WTC11 (cell line): ENCODE measurements at regions of chr15 and their contacts with region 1.

Region 1: DNA sequence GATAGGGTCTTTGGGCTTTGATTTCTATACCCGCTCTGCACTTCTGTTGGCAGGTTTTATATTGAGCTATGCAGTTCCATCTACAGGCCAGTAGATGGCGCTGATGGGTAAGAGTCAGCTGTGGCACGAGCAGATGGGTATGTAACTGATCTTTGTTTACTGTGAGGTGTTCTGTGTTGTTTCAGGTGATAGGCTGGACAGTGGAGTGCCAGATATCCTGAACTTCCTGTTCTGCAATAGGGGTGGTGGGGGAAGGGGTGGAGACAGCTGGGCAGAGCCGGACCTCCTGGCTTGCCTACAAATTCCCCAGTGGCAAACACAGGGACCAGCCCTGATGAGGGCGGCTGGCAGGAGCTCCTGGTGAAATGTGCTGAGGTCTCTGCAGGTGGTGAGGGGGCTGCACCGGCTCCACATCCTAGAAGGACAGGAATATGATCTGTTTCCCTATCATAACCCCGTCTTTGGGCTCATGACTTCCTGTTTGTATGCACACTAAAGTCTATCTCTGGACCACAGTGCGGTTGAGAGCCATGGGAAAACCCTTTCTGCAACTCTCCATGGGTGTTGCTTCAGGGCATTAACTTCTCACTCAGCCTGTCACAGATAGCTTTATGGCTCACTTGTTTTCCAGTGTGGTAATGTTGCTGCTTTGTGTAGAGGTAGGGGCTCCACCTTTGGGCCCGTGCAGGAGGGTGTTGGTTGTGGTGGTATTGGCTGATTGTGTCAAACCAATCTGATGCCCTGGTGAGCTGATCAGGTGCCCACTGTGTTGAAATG is 13.4 kb upstream of the FAM98B start:
- DNase-seq: peak; percentile 27
- ATAC-seq: peak; percentile 96
- H3K4me3 Mint-ChIP-seq: 0 out of 2 replicates have a peak overlapping the region, but pooled peaks have one; percentile 22
- H3K27ac Mint-ChIP-seq: no peak overlapping the region
- H3K4me1 Mint-ChIP-seq: peaks cover 7% of the 10 kb centered on the region; the same call in 1 of the 2 replicates
- H3K27me3 Mint-ChIP-seq: peaks cover 3% of the 10 kb centered on the region; the same call in 1 of the 2 replicates
- CTCF ChIP-seq: peak; percentile 91

Region 2: DNA sequence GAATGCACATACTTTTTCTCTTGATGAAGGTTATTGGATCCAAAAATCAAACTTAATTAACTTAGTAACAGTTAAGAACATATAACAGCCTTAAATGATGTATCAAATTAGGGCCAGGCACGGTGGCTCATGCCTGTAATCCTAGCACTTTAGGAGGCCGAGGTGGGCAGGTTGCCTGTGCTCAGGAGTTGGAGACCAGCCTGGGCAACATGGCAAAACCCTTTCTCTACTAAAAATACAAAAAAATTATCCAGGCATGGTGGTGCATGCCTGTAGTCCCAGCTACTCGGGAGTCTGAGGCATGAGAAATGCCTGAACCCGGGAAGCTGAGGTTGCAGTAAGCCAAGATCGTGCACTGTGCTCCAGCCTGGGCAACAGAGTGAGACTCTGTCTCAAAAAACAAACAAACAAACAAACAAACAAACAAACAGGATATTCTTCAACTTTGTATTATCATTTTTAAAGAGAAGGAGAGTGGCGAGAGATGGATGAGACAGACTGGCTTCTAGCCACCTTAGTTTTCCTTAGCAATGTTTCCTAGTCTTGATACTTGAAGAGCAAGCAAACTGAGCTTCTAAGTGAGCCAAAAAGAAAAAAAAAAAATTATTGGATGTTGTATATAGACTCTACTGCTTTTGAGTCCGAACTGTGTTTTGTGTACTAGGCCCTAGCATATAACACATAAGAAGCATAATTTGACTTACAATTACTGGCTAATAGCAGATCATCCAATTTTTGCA is 174.1 kb before region 1 on chr15:
- CTCF ChIA-PET with region 1: no interaction called
- POLR2A ChIA-PET with region 1: no interaction called
- DNase-seq: no peak
- ATAC-seq: no peak
- H3K4me3 Mint-ChIP-seq: no peak overlapping the region
- H3K27ac Mint-ChIP-seq: peak overlapping the region; percentile 75
- H3K4me1 Mint-ChIP-seq: peaks cover 21% of the 10 kb centered on the region
- H3K27me3 Mint-ChIP-seq: no peaks in the 10 kb centered on the region
- CTCF ChIP-seq: no peak

Region 3: GRCh38 chr15:38349251-38349650 is 91.3 kb before region 1 on chr15:
- CTCF ChIA-PET with region 1: no interaction called
- POLR2A ChIA-PET with region 1: no interaction called
- DNase-seq: no peak
- ATAC-seq: no peak
- H3K4me3 Mint-ChIP-seq: no peak overlapping the region
- H3K27ac Mint-ChIP-seq: no peak overlapping the region
- H3K4me1 Mint-ChIP-seq: peaks cover 2% of the 10 kb centered on the region
- H3K27me3 Mint-ChIP-seq: no peaks in the 10 kb centered on the region
- CTCF ChIP-seq: no peak

Region 4: GRCh38 chr15:38367476-38367875 is 73.1 kb before region 1 on chr15:
- CTCF ChIA-PET with region 1: no interaction called
- POLR2A ChIA-PET with region 1: no interaction called
- DNase-seq: no peak
- ATAC-seq: no peak
- H3K4me3 Mint-ChIP-seq: no peak overlapping the region
- H3K27ac Mint-ChIP-seq: no peak overlapping the region
- H3K4me1 Mint-ChIP-seq: peaks cover 13% of the 10 kb centered on the region
- H3K27me3 Mint-ChIP-seq: no peaks in the 10 kb centered on the region
- CTCF ChIP-seq: no peak

Region 5: DNA sequence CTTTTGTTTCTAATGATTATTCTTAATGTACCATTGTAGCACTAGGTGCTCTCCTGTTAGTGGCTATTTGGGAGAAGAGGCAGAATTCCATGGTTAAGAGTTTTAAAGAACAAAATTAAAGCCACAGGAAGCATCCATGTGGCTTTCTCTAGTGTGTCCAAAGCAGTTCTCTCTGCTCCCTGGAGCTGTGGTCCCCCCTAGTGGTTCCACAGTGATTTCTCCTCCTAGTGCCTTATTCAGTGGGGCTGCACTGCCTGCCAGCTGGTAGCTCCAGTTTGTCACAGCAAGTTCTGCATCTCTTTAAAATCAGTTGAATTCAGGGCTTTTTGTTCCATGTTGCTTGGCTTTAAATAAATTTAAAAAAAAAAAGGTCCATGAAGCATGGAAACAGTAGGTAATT is 26.2 kb before region 1 on chr15:
- CTCF ChIA-PET with region 1: interaction called, 14 read pairs
- POLR2A ChIA-PET with region 1: no interaction called
- DNase-seq: peak; percentile 67
- ATAC-seq: peak; percentile 98
- H3K4me3 Mint-ChIP-seq: no peak overlapping the region
- H3K27ac Mint-ChIP-seq: no peak overlapping the region
- H3K4me1 Mint-ChIP-seq: no peaks in the 10 kb centered on the region
- H3K27me3 Mint-ChIP-seq: no peaks in the 10 kb centered on the region
- CTCF ChIP-seq: peak; percentile 37

Region 6: DNA sequence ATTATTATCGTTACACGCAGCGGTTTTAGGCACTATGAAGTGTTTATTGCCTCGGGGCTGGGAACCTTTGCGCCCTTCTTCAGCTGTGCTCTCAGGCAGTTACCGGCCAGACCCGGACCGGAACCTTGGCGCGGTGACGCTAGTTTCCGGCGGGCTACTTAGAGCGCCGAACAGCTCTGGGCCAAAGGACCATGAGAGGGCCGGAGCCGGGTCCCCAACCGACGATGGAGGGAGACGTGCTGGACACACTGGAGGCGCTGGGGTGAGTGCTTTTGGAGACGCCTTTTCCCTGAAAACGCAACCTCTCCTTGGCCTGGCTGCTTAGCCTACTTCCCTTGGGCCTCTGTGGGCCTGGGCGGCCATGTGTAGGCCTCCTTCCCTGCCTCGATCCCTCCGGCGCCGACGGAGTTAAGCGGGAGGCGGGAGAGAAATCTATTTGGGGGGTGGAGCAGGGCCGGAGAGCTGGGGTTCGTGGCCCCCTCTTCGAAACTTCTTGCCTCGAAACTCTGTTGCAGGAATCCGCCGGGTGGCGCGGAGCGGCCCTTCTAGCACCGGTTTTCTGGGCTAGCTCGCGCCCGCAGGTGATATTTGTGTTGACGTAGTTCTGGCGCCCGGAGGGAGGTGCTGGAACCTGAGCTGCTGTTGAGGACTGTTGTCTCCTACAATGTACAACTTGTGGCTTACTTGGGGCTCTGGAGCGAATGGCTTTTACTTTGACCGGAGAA is 13.6 kb after region 1 on chr15 and contains the start of gene FAM98B:
- CTCF ChIA-PET with region 1: interaction called, 44 read pairs
- POLR2A ChIA-PET with region 1: interaction called, 15 read pairs
- DNase-seq: peak; percentile 92
- ATAC-seq: peak; percentile 96
- H3K4me3 Mint-ChIP-seq: peak within 1 kb of the TSS; percentile 93
- H3K27ac Mint-ChIP-seq: peak within 1 kb of the TSS; percentile 96
- H3K4me1 Mint-ChIP-seq: peaks cover 13% of the 10 kb centered on the region
- H3K27me3 Mint-ChIP-seq: no peaks in the 10 kb centered on the region; the same call in 1 of the 2 replicates
- CTCF ChIP-seq: no peak
- total RNA-seq, gene FAM98B: 38.1 to 46.6 TPM (median 38.5 TPM) in 3 replicates

Region 7: GRCh38 chr15:38514601-38515000 is 74.1 kb after region 1 on chr15:
- CTCF ChIA-PET with region 1: interaction called, 12 read pairs
- POLR2A ChIA-PET with region 1: no interaction called
- DNase-seq: no peak
- ATAC-seq: peak; percentile 70
- H3K4me3 Mint-ChIP-seq: no peak overlapping the region
- H3K27ac Mint-ChIP-seq: peak overlapping the region; percentile 37; the same call in 1 of the 2 replicates
- H3K4me1 Mint-ChIP-seq: peaks cover 41% of the 10 kb centered on the region
- H3K27me3 Mint-ChIP-seq: no peaks in the 10 kb centered on the region
- CTCF ChIP-seq: no peak

Region 8: GRCh38 chr15:38683382-38684242 is 243.1 kb after region 1 on chr15:
- CTCF ChIA-PET with region 1: interaction called, 82 read pairs
- POLR2A ChIA-PET with region 1: no interaction called
- DNase-seq: peak; percentile 65
- ATAC-seq: peak; percentile 94
- H3K4me3 Mint-ChIP-seq: no peak overlapping the region
- H3K27ac Mint-ChIP-seq: no peak overlapping the region
- H3K4me1 Mint-ChIP-seq: peaks cover 8% of the 10 kb centered on the region
- H3K27me3 Mint-ChIP-seq: no peaks in the 10 kb centered on the region; the same call in 1 of the 2 replicates
- CTCF ChIP-seq: peak; percentile 70

Region 9: GRCh38 chr15:38699633-38700230 is 259.2 kb after region 1 on chr15:
- CTCF ChIA-PET with region 1: interaction called, 79 read pairs
- POLR2A ChIA-PET with region 1: no interaction called
- DNase-seq: peak; percentile 67
- ATAC-seq: peak; percentile 68
- H3K4me3 Mint-ChIP-seq: no peak overlapping the region
- H3K27ac Mint-ChIP-seq: no peak overlapping the region
- H3K4me1 Mint-ChIP-seq: peaks cover 13% of the 10 kb centered on the region
- H3K27me3 Mint-ChIP-seq: no peaks in the 10 kb centered on the region
- CTCF ChIP-seq: peak; percentile 60